GM12878 (cell line): ENCODE measurements at regions of chr4 and their contacts with region 1.

Region 1: GRCh38 chr4:102344954-102345794 is at the start of gene SLC39A8:
- DNase-seq: peak; percentile 91
- ATAC-seq: peak; percentile 87
- H3K4me3 ChIP-seq: peak within 1 kb of the TSS; percentile 72
- H3K27ac ChIP-seq: peak within 1 kb of the TSS; percentile 87
- H3K4me1 ChIP-seq: peaks cover 11% of the 10 kb centered on the region
- H3K27me3 ChIP-seq: no peaks in the 10 kb centered on the region
- CTCF ChIP-seq: peak; percentile 84 to 87 (median 86)
- EP300 ChIP-seq: peak; percentile 42 to 69; a peak in 3 of 4 replicates
- POLR2A ChIP-seq: peak; percentile 66
- RAD21 ChIP-seq: peak; percentile 54
- polyA plus RNA-seq, gene SLC39A8: 7.9 to 16.6 TPM

Region 2: DNA sequence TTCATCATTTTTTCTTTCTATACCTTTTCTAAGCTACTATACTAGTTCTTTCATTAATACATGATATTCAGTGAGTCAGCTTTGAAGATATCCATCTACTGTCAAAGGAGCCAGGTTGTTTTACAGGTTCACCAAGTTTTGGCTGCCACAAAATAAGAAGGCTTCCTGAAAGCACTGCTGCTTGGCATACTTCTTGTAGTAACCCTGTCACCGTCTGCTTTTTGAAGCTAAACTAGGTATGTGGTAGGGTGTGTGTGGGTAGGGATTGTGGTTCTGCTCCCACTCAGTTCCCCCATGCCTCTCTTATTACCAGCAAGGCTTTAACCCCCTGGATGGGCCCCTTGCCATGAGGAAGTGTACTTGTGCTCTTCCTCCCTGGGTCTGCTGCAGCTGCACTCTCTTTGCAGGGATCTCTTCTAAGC is 363.5 kb before region 1 on chr4:
- CTCF ChIA-PET with region 1: no interaction called
- POLR2A ChIA-PET with region 1: no interaction called
- RAD21 ChIA-PET with region 1: no interaction called
- SMC1A ChIA-PET with region 1: no interaction called
- in situ Hi-C with region 1: no loop called
- intact Hi-C with region 1: no loop called
- DNase-seq: no peak
- ATAC-seq: no peak
- H3K4me3 ChIP-seq: no peak overlapping the region
- H3K27ac ChIP-seq: no peak overlapping the region
- H3K4me1 ChIP-seq: no peaks in the 10 kb centered on the region
- H3K27me3 ChIP-seq: no peaks in the 10 kb centered on the region
- CTCF ChIP-seq: no peak
- EP300 ChIP-seq: no peak
- POLR2A ChIP-seq: no peak
- RAD21 ChIP-seq: no peak

Region 3: DNA sequence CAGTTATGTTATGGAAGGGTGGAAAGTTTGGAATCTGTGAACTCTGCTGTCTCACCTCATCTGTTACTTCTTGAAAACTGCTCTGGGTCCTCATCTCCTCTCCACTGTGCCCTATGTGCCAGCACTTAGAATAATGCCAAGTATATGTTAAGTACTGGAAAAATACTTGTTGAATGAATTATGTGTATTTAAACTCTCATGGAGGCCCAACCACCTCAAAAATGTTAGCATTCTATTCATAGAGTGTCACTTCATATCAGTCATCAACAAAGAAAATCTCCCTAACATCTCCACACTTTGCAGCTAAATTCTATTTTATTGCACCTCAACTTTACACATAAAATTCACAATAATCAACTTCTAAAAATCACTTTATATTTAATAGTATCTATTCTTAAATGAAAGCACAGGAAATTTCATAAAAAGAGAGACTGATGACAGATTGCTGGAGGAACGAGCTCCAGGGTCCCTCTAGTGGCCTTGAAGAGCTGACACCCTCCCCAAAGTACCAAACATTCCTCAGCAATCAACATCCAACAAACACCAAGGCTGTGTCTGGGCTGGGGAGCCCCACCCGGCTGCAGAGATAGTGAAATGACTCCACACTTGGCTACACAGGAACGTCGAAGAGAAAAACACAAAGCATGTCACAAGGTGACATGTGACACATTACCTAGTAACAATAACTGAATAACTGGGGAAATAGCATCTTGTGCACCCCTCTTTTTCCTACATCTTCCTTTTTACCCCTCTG is 45.6 kb before region 1 on chr4:
- CTCF ChIA-PET with region 1: interaction called, 15 read pairs
- POLR2A ChIA-PET with region 1: interaction called, 3 read pairs
- RAD21 ChIA-PET with region 1: interaction called, 6 read pairs
- SMC1A ChIA-PET with region 1: interaction called, 10 read pairs
- in situ Hi-C with region 1: no loop called
- intact Hi-C with region 1: no loop called
- DNase-seq: no peak
- ATAC-seq: peak; percentile 98
- H3K4me3 ChIP-seq: no peak overlapping the region
- H3K27ac ChIP-seq: no peak overlapping the region
- H3K4me1 ChIP-seq: no peaks in the 10 kb centered on the region
- H3K27me3 ChIP-seq: no peaks in the 10 kb centered on the region
- CTCF ChIP-seq: peak; percentile 74 to 77 (median 75)
- EP300 ChIP-seq: no peak
- POLR2A ChIP-seq: no peak
- RAD21 ChIP-seq: peak; percentile 74

Region 4: GRCh38 chr4:102390438-102390837 is 45.3 kb after region 1 on chr4:
- CTCF ChIA-PET with region 1: interaction called, 6 read pairs
- POLR2A ChIA-PET with region 1: no interaction called
- RAD21 ChIA-PET with region 1: interaction called, 9 read pairs
- SMC1A ChIA-PET with region 1: interaction called, 4 read pairs
- in situ Hi-C with region 1: no loop called
- intact Hi-C with region 1: loop called (anchors 1 kb)
- DNase-seq: peak; percentile 57
- ATAC-seq: peak; percentile 98
- H3K4me3 ChIP-seq: no peak overlapping the region
- H3K27ac ChIP-seq: no peak overlapping the region
- H3K4me1 ChIP-seq: no peaks in the 10 kb centered on the region
- H3K27me3 ChIP-seq: no peaks in the 10 kb centered on the region
- CTCF ChIP-seq: no peak
- EP300 ChIP-seq: peak in 1 of 2 experiments; percentile 77; a peak in 3 of 4 replicates
- POLR2A ChIP-seq: no peak
- RAD21 ChIP-seq: no peak

Region 5: GRCh38 chr4:102500696-102501446 is 155.7 kb after region 1 on chr4 and contains the start of gene NFKB1:
- CTCF ChIA-PET with region 1: interaction called, 5 read pairs
- POLR2A ChIA-PET with region 1: no interaction called
- RAD21 ChIA-PET with region 1: no interaction called
- SMC1A ChIA-PET with region 1: no interaction called
- in situ Hi-C with region 1: no loop called
- intact Hi-C with region 1: loop called (anchors 2 kb)
- DNase-seq: peak; percentile 55
- ATAC-seq: peak; percentile 48
- H3K4me3 ChIP-seq: peak within 1 kb of the TSS; percentile 75
- H3K27ac ChIP-seq: peak within 1 kb of the TSS; percentile 97
- H3K4me1 ChIP-seq: peaks cover 3% of the 10 kb centered on the region; the same call in 1 of the 2 replicates
- H3K27me3 ChIP-seq: no peaks in the 10 kb centered on the region
- CTCF ChIP-seq: no peak
- EP300 ChIP-seq: peak in 1 of 2 experiments; percentile 65; a peak in 1 of 4 replicates
- POLR2A ChIP-seq: peak; percentile 83; the same call in 1 of the 2 replicates
- RAD21 ChIP-seq: no peak
- polyA plus RNA-seq, gene NFKB1: 20.8 to 32.7 TPM

Region 6: GRCh38 chr4:102518703-102519131 is 173.5 kb after region 1 on chr4:
- CTCF ChIA-PET with region 1: no interaction called
- POLR2A ChIA-PET with region 1: no interaction called
- RAD21 ChIA-PET with region 1: no interaction called
- SMC1A ChIA-PET with region 1: no interaction called
- in situ Hi-C with region 1: no loop called
- intact Hi-C with region 1: no loop called
- DNase-seq: no peak
- ATAC-seq: peak; percentile 46
- H3K4me3 ChIP-seq: no peak overlapping the region
- H3K27ac ChIP-seq: no peak overlapping the region
- H3K4me1 ChIP-seq: peaks cover 10% of the 10 kb centered on the region; the same call in 1 of the 2 replicates
- H3K27me3 ChIP-seq: no peaks in the 10 kb centered on the region
- CTCF ChIP-seq: no peak
- EP300 ChIP-seq: no peak
- POLR2A ChIP-seq: no peak
- RAD21 ChIP-seq: no peak

Region 7: DNA sequence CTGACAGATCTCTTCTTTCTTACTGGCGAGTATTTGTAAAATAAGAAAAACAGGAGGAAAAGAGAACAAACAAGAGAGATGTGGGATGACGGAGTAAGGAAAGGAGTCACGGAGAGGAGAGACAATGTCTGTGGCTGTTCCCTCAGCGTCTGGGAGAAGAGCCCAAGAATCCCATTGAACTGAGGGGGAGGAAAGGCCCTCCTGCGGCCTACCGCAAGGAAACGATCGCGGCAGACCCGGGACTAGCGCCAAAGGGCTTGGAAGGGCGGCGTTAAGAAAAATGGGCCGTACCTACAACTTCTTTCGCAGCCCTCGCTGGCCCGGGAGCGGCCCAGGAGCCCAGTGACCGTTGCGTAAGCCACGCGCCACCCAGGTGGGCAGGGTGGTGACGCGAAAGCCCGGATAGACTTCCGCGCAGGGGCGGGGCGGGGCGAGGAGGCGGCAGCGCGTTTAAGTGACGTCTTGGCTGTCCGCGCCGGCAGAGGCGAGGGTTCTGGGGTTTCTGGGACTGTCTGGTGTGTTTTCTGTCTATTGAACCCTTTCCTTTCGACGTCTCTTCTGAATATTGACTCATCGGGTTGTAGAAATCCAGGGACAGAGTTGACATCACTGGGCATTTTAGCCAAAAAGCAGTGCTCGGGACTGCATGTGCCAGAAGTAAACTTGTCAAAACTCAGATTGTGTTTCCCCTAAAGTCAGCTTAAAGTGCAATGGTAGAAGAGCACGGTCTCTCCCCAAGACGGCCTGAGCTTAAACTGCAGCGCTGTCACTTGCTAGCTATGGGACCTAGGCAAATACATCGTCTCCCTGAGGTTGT is 674.3 kb after region 1 on chr4 and contains the start of gene SLC9B1:
- CTCF ChIA-PET with region 1: no interaction called
- POLR2A ChIA-PET with region 1: no interaction called
- RAD21 ChIA-PET with region 1: no interaction called
- SMC1A ChIA-PET with region 1: no interaction called
- in situ Hi-C with region 1: no loop called
- intact Hi-C with region 1: loop called (anchors 5 kb)
- DNase-seq: peak; percentile 56
- ATAC-seq: peak; percentile 99
- H3K4me3 ChIP-seq: peak within 1 kb of the TSS; percentile 83
- H3K27ac ChIP-seq: peak within 1 kb of the TSS; percentile 87
- H3K4me1 ChIP-seq: peaks cover 5% of the 10 kb centered on the region; the same call in 1 of the 2 replicates
- H3K27me3 ChIP-seq: no peaks in the 10 kb centered on the region
- CTCF ChIP-seq: no peak
- EP300 ChIP-seq: no peak
- POLR2A ChIP-seq: peak; percentile 93
- RAD21 ChIP-seq: no peak
- polyA plus RNA-seq, gene SLC9B1: 1.9 to 2.1 TPM